CD8-positive, alpha-beta memory T cell (primary cell): ENCODE measurements at regions of chrX and their contacts with region 1.

Region 1: DNA sequence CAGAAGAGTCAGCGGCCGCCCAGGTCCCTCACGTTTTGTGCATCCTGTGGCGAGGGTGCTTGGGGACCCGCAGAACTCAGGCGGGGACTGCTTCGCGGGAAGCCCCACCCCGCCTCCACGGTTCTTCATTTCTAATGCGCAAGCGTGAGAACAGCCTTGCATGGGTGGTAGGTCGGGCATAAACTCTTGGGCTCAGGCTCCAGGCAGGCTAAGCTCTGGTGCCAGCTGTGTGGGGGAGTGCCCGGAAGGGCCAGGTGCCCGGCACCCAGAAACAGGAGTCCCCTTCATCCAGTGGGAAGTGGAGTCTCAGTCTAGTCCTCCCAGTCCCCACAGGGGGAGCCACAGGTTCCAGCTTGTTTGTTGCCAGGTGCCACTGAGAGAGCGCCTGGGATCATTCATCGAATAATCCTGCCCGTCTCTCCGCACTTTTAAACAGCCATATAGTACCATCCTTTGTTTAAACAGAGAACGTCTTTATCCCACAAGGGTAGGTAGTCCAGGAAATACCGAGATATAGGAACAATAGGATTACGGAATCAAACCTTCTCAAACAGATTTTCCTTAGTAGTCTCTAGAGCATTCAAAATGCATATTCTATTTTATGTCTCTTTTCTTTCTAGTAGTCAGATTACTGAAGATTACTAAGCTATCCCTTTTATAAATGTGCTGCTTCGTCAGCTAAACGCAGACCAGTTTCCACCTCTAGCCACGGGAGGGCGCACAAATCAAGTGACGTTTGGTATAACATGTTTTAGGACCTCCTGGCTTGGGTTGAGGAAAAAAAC is 12.7 kb upstream of the RBBP7 start:
- DNase-seq: peak; percentile 35 to 76 (median 41)
- H3K4me3 ChIP-seq: peak overlapping the region; percentile 58
- H3K4me3 Mint-ChIP-seq: peak overlapping the region; percentile 72 to 92 (median 79)
- H3K27ac ChIP-seq: no peak overlapping the region
- H3K27ac Mint-ChIP-seq: peak overlapping the region; percentile 48 to 90 (median 82)
- H3K4me1 ChIP-seq: peaks cover 5% of the 10 kb centered on the region
- H3K4me1 Mint-ChIP-seq: peaks cover 7 to 10% (median 8%) of the 10 kb centered on the region in 3 donors
- H3K27me3 ChIP-seq: no peaks in the 10 kb centered on the region
- H3K27me3 Mint-ChIP-seq: peaks cover 0 to 23% of the 10 kb centered on the region in 2 donors

Region 2: DNA sequence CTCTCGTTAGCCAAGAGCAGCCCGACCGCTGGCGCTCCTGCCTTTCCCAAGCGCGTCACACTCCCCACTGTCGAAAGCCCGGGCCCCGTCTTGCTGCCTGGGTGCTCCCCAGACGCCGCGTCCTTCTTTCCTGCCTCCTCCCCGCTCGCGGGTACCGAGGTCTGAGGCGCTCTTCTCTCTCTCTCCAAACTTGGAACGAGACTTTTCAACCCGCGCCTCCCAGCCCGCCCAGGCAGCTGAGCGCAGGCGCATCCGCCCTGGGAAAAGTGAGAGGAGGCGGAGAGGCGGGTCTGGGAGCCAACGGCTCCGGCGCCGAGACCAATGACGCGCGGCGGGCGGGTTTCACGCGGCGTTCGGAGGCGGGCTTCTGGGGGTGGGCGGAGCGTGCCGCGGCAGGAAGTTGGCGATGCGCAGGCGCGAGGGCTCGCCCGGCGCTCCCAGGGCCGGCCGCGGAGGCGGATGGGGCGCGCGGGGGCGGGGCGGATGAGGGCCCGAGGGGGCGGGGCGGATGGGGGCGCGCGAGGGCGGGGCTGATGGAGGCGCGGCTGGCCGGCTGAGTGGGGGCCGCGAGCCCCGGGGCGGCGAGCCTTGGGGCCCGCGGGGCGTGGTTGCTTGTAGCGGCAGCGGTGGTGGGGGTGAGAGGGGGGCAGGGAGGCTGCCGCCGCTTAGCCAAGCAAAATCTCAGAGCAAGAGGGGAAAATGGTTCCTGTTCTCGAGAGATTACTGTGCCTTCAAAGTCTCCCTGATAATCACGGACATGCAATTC is 12.6 kb before region 1 on chrX and contains the start of gene RBBP7:
- CTCF ChIA-PET with region 1: interaction called, 24 read pairs
- POLR2A ChIA-PET with region 1: interaction called, 10 read pairs
- DNase-seq: peak; percentile 87 to 97 (median 93)
- H3K4me3 ChIP-seq: peak within 1 kb of the TSS; percentile 74
- H3K4me3 Mint-ChIP-seq: peak within 1 kb of the TSS; percentile 93 to 99 (median 98)
- H3K27ac ChIP-seq: peak within 1 kb of the TSS; percentile 80
- H3K27ac Mint-ChIP-seq: peak within 1 kb of the TSS; percentile 93 to 99 (median 98)
- H3K4me1 ChIP-seq: peaks cover 33% of the 10 kb centered on the region
- H3K4me1 Mint-ChIP-seq: peaks cover 35 to 47% (median 45%) of the 10 kb centered on the region in 3 donors
- H3K27me3 ChIP-seq: no peaks in the 10 kb centered on the region
- H3K27me3 Mint-ChIP-seq: peaks cover 0 to 7% of the 10 kb centered on the region in 2 donors
- total RNA-seq, gene RBBP7: 156 to 163 TPM

Region 3: GRCh38 chrX:17052210-17052609 is 169.3 kb after region 1 on chrX:
- CTCF ChIA-PET with region 1: no interaction called
- POLR2A ChIA-PET with region 1: no interaction called
- DNase-seq: no peak
- H3K4me3 ChIP-seq: no peak overlapping the region
- H3K4me3 Mint-ChIP-seq: no peak overlapping the region
- H3K27ac ChIP-seq: no peak overlapping the region
- H3K27ac Mint-ChIP-seq: no peak overlapping the region
- H3K4me1 ChIP-seq: no peaks in the 10 kb centered on the region
- H3K4me1 Mint-ChIP-seq: no peaks in the 10 kb centered on the region
- H3K27me3 ChIP-seq: no peaks in the 10 kb centered on the region
- H3K27me3 Mint-ChIP-seq: peaks cover 0 to 3% of the 10 kb centered on the region in 2 donors